IMR-90 (cell line): ENCODE measurements at regions of chr5 and their contacts with region 1.

Region 1: GRCh38 chr5:73215891-73216610 is 43.1 kb downstream of the TMEM174 start:
- DNase-seq: peak; percentile 73
- ATAC-seq: peak; percentile 98
- H3K4me3 ChIP-seq: peak overlapping the region; percentile 44
- H3K27ac ChIP-seq: peak overlapping the region; percentile 56; the same call in 1 of the 2 replicates
- H3K4me1 ChIP-seq: 0 out of 2 replicates have a peak, but pooled peaks cover 2% of the 10 kb centered on the region
- H3K27me3 ChIP-seq: 0 out of 2 replicates have a peak, but pooled peaks cover 3% of the 10 kb centered on the region
- CTCF ChIP-seq: peak; percentile 80
- POLR2A ChIP-seq: no peak
- RAD21 ChIP-seq: peak; percentile 65

Region 2: DNA sequence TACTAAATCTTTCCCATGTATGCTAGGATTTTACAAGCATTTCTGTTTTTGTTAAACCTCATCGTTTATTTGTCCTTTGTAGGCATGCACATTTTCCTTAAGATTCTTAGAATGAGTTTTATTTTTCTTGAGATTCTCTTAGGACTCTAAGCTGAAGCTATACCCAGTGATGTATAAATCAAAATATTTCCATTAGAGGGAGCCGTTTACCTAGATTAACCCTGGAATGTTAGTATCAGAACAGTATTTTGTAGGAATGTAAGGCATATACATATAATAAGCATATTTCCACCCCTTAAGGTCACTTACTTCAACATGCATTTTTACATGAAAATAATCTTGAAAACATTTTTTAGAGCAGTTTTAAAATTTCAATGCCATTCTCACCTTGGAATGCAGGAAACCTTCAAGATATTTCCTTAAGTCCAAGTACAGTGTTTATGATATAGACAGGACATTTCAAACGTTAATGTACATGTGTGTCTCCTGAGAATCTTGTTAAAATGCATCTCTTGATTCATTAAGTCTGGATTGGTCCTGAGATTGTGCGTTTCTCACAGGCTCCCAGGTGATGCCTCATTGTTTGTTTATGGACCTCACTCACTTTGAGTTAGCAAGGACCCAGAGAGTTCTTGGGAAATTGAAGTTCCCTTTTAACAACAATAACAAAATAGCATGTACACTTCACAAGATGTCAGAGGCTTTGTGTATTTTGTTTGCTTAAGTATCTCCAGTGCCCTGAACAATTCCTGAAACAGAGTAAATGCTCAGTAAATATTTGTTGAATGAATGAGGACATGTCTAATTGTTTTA is 295.2 kb before region 1 on chr5:
- CTCF ChIA-PET with region 1: no interaction called
- POLR2A ChIA-PET with region 1: no interaction called
- dilution Hi-C with region 1: no loop called
- in situ Hi-C with region 1: no loop called
- intact Hi-C with region 1: loop called (anchors 5 kb)
- DNase-seq: peak; percentile 55
- ATAC-seq: peak; percentile 71
- H3K4me3 ChIP-seq: no peak overlapping the region
- H3K27ac ChIP-seq: no peak overlapping the region
- H3K4me1 ChIP-seq: peaks cover 2% of the 10 kb centered on the region; the same call in 1 of the 2 replicates
- H3K27me3 ChIP-seq: no peaks in the 10 kb centered on the region
- CTCF ChIP-seq: peak; percentile 56
- POLR2A ChIP-seq: no peak
- RAD21 ChIP-seq: peak; percentile 66

Region 3: DNA sequence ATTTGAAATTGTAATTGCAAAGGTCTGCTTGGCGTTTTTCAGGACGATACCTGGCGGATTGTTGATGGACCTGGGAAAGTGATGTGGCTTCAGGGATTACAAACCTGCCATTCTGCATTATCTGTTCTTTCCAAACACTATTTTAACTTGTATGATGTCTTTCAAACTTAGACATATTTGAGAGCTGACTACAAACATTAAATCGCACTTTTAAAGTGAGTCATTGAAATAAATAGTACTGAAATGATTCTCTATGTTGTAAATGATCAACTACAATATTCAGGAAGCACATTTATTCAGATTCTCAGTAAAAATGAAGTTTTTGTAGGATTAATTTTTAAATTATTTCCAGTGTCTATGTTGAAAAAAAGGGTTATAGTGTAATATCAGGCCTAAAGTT is 128.0 kb before region 1 on chr5:
- CTCF ChIA-PET with region 1: interaction called, 9 read pairs
- POLR2A ChIA-PET with region 1: no interaction called
- dilution Hi-C with region 1: no loop called
- in situ Hi-C with region 1: no loop called
- intact Hi-C with region 1: loop called (anchors 1 kb)
- DNase-seq: peak; percentile 46
- ATAC-seq: peak; percentile 49; the same call in 1 of the 2 replicates
- H3K4me3 ChIP-seq: no peak overlapping the region
- H3K27ac ChIP-seq: no peak overlapping the region
- H3K4me1 ChIP-seq: 0 out of 2 replicates have a peak, but pooled peaks cover 1% of the 10 kb centered on the region
- H3K27me3 ChIP-seq: no peaks in the 10 kb centered on the region
- CTCF ChIP-seq: no peak
- POLR2A ChIP-seq: no peak
- RAD21 ChIP-seq: no peak

Region 4: DNA sequence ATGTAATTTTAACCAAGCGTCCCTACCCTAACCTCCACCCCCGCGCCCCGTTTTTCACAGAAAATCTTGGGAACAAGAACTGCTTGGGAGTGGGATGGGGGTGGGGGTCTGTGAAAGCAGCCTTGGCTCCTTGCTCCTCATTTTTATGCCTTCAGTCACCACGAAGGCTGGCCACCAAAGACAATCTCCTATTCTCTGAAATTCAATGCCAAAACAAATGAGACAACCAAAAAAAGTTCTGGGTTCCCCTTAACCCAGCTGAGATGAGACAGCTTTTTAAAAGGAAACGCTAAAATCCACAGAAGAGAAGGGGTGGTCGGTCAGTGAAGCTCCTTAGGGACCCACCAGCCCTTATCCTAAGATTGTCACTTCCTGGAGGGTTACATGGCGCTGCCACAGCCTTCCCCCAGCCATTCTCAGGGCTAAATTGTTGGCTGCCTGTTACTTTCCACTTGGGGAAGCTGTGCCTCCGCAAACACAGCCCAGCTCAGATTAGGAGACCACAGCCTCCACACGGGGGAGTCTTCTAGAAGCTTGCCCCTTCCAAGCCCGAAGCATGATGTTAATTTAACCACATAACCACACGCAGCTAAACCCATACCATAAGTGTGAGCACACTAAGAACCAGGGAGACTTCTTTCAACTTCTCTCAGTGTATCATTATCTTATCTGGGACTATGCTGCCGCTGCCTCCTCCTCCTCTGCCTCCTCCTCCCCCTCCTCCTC is 96.3 kb after region 1 on chr5:
- CTCF ChIA-PET with region 1: interaction called, 12 read pairs
- POLR2A ChIA-PET with region 1: no interaction called
- dilution Hi-C with region 1: no loop called
- in situ Hi-C with region 1: no loop called
- intact Hi-C with region 1: loop called (anchors 2 kb)
- DNase-seq: peak; percentile 96
- ATAC-seq: peak; percentile 63
- H3K4me3 ChIP-seq: no peak overlapping the region
- H3K27ac ChIP-seq: peak overlapping the region; percentile 74
- H3K4me1 ChIP-seq: peaks cover 14% of the 10 kb centered on the region
- H3K27me3 ChIP-seq: no peaks in the 10 kb centered on the region; the same call in 1 of the 2 replicates
- CTCF ChIP-seq: peak; percentile 75
- POLR2A ChIP-seq: no peak; the same call in 1 of the 2 replicates
- RAD21 ChIP-seq: peak; percentile 78

Region 5: DNA sequence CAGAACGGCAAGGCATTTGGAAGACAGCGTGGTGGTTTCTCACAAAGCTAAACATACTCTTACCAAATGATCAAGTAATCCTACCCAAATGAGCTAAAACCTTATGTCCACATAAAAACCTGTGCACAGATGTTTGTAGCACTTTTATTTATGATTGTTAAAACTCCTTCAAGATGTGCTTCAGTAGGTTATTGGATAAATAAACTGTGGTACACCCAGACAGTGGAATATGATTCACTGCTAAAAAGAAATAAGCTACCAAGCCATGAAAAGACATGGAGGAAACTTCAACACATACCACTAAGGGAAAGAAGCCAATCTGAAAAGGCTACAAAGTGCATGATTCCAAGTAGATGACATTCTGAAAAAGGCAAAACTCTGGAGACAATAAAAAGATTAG is 138.4 kb after region 1 on chr5:
- CTCF ChIA-PET with region 1: no interaction called
- POLR2A ChIA-PET with region 1: no interaction called
- dilution Hi-C with region 1: no loop called
- in situ Hi-C with region 1: no loop called
- intact Hi-C with region 1: no loop called
- DNase-seq: peak; percentile 67
- ATAC-seq: peak; percentile 64
- H3K4me3 ChIP-seq: no peak overlapping the region
- H3K27ac ChIP-seq: no peak overlapping the region
- H3K4me1 ChIP-seq: peaks cover 2% of the 10 kb centered on the region; the same call in 1 of the 2 replicates
- H3K27me3 ChIP-seq: 0 out of 2 replicates have a peak, but pooled peaks cover 3% of the 10 kb centered on the region
- CTCF ChIP-seq: no peak
- POLR2A ChIP-seq: no peak
- RAD21 ChIP-seq: no peak

Region 6: GRCh38 chr5:73448463-73449136 is 232.5 kb after region 1 on chr5 and contains the start of gene FOXD1:
- CTCF ChIA-PET with region 1: interaction called, 19 read pairs
- POLR2A ChIA-PET with region 1: interaction called, 4 read pairs
- dilution Hi-C with region 1: no loop called
- in situ Hi-C with region 1: loop called (anchors 10 kb)
- intact Hi-C with region 1: loop called (anchors 1 kb)
- DNase-seq: peak; percentile 97
- ATAC-seq: peak; percentile 82
- H3K4me3 ChIP-seq: peak within 1 kb of the TSS; percentile 94
- H3K27ac ChIP-seq: peak within 1 kb of the TSS; percentile 97
- H3K4me1 ChIP-seq: peaks cover 7% of the 10 kb centered on the region; the same call in 1 of the 2 replicates
- H3K27me3 ChIP-seq: peaks cover 8% of the 10 kb centered on the region
- CTCF ChIP-seq: 0 out of 2 replicates have a peak, but pooled peaks have one; percentile 1
- POLR2A ChIP-seq: peak; percentile 94
- RAD21 ChIP-seq: peak; percentile 18; the same call in 1 of the 2 replicates
- total RNA-seq, gene FOXD1: 3.2 and 6.4 TPM in 2 replicates

Region 7: GRCh38 chr5:73534971-73535370 is 318.9 kb after region 1 on chr5:
- CTCF ChIA-PET with region 1: interaction called, 3 read pairs
- POLR2A ChIA-PET with region 1: no interaction called
- dilution Hi-C with region 1: no loop called
- in situ Hi-C with region 1: no loop called
- intact Hi-C with region 1: loop called (anchors 5 kb)
- DNase-seq: no peak
- ATAC-seq: no peak
- H3K4me3 ChIP-seq: no peak overlapping the region
- H3K27ac ChIP-seq: no peak overlapping the region
- H3K4me1 ChIP-seq: peaks cover 3% of the 10 kb centered on the region
- H3K27me3 ChIP-seq: no peaks in the 10 kb centered on the region
- CTCF ChIP-seq: no peak
- POLR2A ChIP-seq: no peak
- RAD21 ChIP-seq: no peak